ENCODE measurements at regions of chr9 and their contacts with region 1.

Region 1: DNA sequence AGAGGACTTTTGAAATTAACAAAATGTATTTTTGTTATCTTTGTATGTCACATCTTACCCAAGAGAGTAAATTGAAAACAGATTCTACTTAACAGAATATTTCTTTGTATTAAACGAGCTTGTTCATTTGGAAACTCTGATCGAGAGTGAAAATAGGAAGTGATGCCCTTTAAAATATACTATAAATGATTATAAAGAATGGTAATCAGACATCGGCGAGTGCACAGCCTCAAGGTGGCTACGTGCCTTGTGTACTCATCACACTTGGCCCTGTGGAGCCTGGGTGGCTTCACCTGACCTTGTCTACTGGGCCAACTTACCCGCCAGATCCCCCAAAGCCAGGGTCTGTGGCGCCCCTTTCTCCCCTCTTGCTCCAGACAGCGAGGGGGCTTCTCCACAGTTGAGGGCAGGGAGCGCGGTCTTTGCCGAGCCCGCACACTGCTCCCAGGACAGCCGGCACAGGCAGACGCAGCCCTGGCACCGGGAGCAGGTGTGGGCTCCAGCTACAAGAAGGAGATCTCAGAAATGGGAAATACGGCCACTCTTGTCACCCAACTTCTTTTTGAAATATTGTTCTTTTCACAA is 243.2 kb downstream of the CEMIP2 start:
- DNase-seq: peak in 1 of 5 donors; percentile 34
- ATAC-seq: no peak
- H3K4me3 ChIP-seq: no peak overlapping the region
- H3K27ac ChIP-seq: no peak overlapping the region
- H3K4me1 ChIP-seq: no peaks in the 10 kb centered on the region
- H3K27me3 ChIP-seq: no peaks in the 10 kb centered on the region
- CTCF ChIP-seq: no peak
- POLR2A ChIP-seq: no peak

Region 2: DNA sequence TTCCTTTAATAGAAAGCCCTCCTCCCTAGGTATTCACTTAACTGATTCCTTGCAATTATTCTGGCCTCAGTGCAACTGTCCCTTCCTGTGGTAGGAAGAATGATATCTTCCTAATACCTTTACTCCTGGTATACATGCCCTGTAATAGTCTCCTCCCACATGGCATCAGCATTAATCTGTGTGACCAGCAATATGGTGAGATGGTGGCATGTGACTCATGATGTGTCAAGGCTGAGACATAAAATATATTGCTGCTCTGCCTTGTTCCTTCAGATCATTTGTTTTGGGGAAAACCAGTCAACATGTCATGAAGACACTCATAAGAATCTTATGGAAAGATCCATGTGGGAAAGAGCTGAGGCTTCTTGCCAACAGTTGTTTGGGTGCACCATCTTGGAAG is 254.5 kb before region 1 on chr9:
- intact Hi-C with region 1: no loop called
- DNase-seq: no peak
- ATAC-seq: no peak
- H3K4me3 ChIP-seq: no peak overlapping the region
- H3K27ac ChIP-seq: no peak overlapping the region
- H3K4me1 ChIP-seq: no peaks in the 10 kb centered on the region
- H3K27me3 ChIP-seq: peaks cover 0 to 7% (median 0%) of the 10 kb centered on the region in 9 donors
- CTCF ChIP-seq: no peak
- POLR2A ChIP-seq: no peak

Region 3: GRCh38 chr9:71506821-71507220 is 18.3 kb before region 1 on chr9:
- intact Hi-C with region 1: loop called in 1 of 10 experiments (anchors 1 kb)
- DNase-seq: peak in 1 of 5 donors; percentile 37
- ATAC-seq: peak in 2 of 4 donors; percentile 82 to 89
- H3K4me3 ChIP-seq: no peak overlapping the region
- H3K27ac ChIP-seq: no peak overlapping the region
- H3K4me1 ChIP-seq: no peaks in the 10 kb centered on the region
- H3K27me3 ChIP-seq: no peaks in the 10 kb centered on the region
- CTCF ChIP-seq: no peak
- POLR2A ChIP-seq: no peak

Region 4: DNA sequence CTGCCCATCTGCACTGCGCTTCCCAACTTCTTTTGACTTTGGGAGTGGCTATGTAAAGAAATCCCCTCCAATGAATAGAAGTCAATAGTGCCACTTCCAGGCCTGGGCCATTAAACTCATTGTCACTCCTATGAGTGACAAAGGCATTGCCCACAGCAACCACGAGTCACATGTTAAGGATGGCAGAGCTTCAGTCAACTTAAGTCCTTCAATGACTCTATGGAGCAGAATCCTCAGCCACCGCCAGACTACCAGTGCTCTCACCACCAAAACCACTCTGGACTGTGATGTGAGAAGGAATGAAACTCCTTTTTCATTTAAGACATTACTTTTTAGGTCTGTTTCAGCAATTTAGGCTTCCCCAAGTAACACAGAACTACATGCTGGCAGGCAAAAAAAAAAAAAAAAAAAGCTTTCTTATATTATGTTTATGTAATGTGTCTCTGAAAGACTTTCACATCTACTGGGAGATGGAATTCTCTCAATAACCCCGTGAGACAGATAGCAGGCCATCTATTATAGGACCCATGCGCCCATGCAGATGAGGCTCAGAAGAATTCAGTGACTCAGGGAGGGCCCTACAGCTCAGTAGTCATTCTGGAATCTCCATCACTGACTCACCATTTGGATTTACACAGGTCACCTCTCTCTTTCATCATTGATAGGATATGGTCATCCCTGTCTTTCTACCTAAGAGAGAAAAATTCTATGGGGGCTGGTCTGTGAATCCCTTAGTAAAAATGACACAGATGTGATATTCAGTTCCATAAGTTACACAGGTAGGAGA is 62.7 kb after region 1 on chr9:
- intact Hi-C with region 1: loop called in 1 of 10 experiments (anchors 10 kb)
- DNase-seq: no peak
- ATAC-seq: no peak
- H3K4me3 ChIP-seq: no peak overlapping the region
- H3K27ac ChIP-seq: no peak overlapping the region
- H3K4me1 ChIP-seq: no peaks in the 10 kb centered on the region
- H3K27me3 ChIP-seq: no peaks in the 10 kb centered on the region
- CTCF ChIP-seq: no peak
- POLR2A ChIP-seq: no peak